ENCODE measurements at regions of chr1 and their contacts with region 1.

Region 1: DNA sequence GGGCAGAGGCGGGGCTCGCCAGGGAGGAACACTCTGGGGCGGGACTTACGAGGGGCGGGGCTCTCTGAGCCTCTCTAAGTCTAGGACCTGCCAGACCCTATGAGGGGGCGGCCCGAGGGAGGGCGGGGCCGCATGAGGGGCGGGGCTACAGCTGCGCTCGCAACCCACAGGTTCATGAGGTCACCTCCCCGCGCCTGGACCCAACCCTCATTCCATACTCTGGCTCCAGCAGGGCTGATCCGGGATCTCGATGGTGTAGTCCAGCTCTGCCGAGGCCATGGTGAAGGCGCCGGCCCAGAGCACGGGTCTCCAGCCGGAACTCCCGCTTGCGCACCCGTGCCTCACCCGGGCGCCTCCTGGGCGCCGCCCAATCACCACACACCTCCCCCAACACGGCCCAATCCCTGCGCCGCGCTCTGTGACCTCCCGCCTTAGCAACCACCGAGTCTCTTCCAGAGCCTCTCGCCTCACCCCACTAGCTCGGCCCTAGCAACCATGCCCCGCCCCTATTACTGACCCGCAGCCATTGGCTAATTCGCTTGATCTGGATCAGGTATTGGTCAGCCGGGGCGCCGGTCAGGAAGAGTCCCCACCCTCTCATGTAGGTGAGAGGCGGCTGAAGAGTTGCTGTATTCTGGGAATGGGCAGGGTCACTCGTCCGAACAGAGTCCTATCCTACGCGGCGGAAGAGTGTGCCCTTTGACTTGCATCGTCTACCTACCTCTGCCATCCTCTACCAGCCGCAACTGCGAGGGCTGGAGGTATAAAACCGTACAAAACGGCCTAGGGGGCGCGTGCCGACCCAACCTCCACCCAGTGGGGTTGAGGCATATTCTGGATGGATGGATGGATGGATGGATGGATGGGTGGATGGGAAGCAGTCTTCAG is at the starts of genes ARMH1 and TMEM53:
- DNase-seq: peak; percentile 99
- ATAC-seq: peak; percentile 91
- H3K4me3 ChIP-seq: peak within 1 kb of the TSS; percentile 79
- H3K27ac ChIP-seq: peak within 1 kb of the TSS; percentile 78
- H3K4me1 ChIP-seq: peaks cover 42% of the 10 kb centered on the region
- H3K27me3 ChIP-seq: no peaks in the 10 kb centered on the region
- CTCF ChIP-seq: 0 out of 2 replicates have a peak, but pooled peaks have one; percentile 20
- total RNA-seq, gene ARMH1: 0.15 TPM in 1 of 2 replicates, not detected in the other
- total RNA-seq, gene TMEM53: 9.3 and 12.0 TPM in 2 replicates

Region 2: GRCh38 chr1:44707959-44708831 is 33.8 kb after region 1 on chr1:
- CTCF ChIA-PET with region 1: no interaction called
- POLR2A ChIA-PET with region 1: no interaction called
- intact Hi-C with region 1: loop called (anchors 5 kb)
- DNase-seq: peak; percentile 57
- ATAC-seq: no peak
- H3K4me3 ChIP-seq: no peak overlapping the region
- H3K27ac ChIP-seq: peak overlapping the region; percentile 88
- H3K4me1 ChIP-seq: peaks cover 35% of the 10 kb centered on the region
- H3K27me3 ChIP-seq: no peaks in the 10 kb centered on the region
- CTCF ChIP-seq: peak; percentile 51; the same call in 1 of the 2 replicates